AG04449 (cell line): ENCODE measurements at regions of chr3 and their contacts with region 1.

Region 1: DNA sequence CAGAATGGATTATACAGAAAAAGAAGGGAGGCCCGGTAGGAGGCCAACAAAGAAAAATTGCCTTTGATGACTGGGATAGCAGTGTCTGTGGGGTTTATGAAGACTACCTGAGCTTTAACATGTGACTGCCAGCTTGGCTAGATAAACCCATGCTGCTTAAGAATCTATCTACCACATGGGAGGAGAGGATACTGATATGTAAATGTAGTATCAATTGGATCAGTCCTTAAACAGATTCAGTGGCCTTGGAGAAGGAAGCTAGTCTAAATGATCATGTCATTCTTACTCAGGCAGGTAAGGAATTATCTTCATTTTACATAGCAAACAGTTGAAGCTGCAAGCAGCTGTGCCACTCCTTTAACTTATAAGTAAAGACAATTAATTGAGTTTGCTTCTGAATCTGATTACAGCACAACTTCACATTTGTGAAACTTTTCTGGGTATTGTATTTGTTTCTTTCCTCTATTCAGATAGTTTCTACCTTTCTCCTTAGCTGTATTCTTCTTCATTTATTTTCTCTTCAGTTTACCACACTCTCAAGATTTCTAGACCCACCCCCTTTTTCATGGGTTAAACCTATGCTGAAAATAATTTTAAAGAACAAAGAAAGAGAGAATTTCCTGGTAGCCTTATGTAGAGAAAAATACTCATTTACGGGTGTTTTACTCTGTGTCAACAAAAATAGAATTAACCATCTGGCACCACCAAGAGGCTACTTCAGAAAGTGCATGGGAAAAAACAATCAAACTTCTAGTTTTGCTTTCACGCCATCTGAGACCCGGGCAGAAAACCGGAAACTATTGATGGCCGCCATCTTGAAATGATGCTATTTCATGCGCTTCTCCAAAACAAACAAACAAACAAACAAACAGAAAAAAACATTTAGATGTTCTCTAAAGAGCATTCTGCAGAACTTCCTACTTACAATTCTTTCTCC is 49.8 kb upstream of the SYNPR start:
- DNase-seq: no peak
- H3K4me3 ChIP-seq: no peak overlapping the region
- CTCF ChIP-seq: peak; percentile 27

Region 2: GRCh38 chr3:63240381-63240917 is 12.1 kb after region 1 on chr3:
- CTCF ChIA-PET with region 1: interaction called, 10 read pairs
- POLR2A ChIA-PET with region 1: no interaction called
- DNase-seq: no peak
- H3K4me3 ChIP-seq: no peak overlapping the region
- CTCF ChIP-seq: no peak